Calu3 (cell line): ENCODE measurements at regions of chr1 and their contacts with region 1.

Region 1: DNA sequence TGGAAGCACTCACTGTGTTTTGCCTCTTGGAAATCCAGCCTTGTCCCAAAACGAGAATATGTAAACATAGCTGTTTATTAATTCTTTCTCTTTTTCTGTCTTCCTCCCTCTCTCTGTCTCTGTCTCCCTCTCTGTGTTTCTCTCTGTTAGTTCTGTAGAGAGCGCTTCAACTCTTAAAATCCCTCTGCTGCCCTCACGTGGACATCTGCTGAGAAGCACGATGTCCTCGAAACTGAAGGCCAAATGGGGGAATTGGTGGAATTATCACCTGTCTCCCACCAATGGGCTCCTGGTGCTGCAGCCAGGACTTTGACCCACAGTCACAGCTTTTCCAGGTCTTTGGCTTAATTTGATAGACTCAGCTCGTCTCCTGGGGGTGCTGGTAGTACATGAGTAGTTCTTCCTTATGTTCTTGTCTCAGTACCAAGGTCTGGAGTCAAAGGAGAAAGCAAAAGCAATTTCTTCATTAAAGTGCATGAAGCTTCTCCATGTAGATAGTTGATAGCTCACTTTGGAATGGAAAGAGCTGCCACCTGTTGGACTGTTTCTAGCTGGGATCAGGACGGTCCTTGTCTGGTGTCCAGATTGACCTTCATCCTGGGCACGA is 5.5 kb upstream of the GBP6 start:
- DNase-seq: peak; percentile 78
- H3K4me3 Mint-ChIP-seq: no peak overlapping the region
- H3K27ac Mint-ChIP-seq: no peak overlapping the region
- H3K4me1 Mint-ChIP-seq: peaks cover 13% of the 10 kb centered on the region
- H3K27me3 Mint-ChIP-seq: no peaks in the 10 kb centered on the region
- CTCF ChIP-seq: peak; percentile 61

Region 2: DNA sequence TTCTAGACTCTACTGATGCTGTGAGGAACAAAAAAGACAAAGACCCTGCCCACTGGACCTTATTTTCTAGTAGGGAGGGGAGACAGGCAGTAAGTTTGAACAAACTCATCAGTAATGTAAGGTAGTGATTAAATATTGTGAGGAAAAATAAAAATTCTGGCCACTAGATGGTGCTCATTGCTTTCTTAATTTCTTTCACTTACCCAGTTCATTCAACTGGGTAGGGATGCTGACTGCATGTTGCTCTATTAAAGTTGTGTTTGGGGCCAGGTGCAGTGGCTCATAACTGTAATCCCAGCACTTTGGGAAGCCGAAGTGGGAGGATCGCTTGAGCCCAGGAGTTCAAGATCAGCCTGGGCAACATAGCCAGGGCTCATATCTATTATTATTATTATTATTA is 359.7 kb before region 1 on chr1:
- CTCF ChIA-PET with region 1: no interaction called
- intact Hi-C with region 1: loop called (anchors 1 kb)
- DNase-seq: peak; percentile 35
- H3K4me3 Mint-ChIP-seq: no peak overlapping the region
- H3K27ac Mint-ChIP-seq: no peak overlapping the region
- H3K4me1 Mint-ChIP-seq: peaks cover 9% of the 10 kb centered on the region
- H3K27me3 Mint-ChIP-seq: no peaks in the 10 kb centered on the region
- CTCF ChIP-seq: peak; percentile 29

Region 3: GRCh38 chr1:89198491-89199072 is 159.8 kb before region 1 on chr1 and contains the start of gene GBP4:
- CTCF ChIA-PET with region 1: no interaction called
- intact Hi-C with region 1: loop called (anchors 10 kb)
- DNase-seq: peak; percentile 18
- H3K4me3 Mint-ChIP-seq: peak within 1 kb of the TSS; percentile 75
- H3K27ac Mint-ChIP-seq: peak within 1 kb of the TSS; percentile 53
- H3K4me1 Mint-ChIP-seq: peaks cover 16% of the 10 kb centered on the region
- H3K27me3 Mint-ChIP-seq: no peaks in the 10 kb centered on the region
- CTCF ChIP-seq: no peak
- total RNA-seq, gene GBP4: 10.3 and 26.6 TPM in 2 replicates

Region 4: GRCh38 chr1:89310505-89310904 is 47.9 kb before region 1 on chr1:
- CTCF ChIA-PET with region 1: no interaction called
- intact Hi-C with region 1: no loop called
- DNase-seq: no peak
- H3K4me3 Mint-ChIP-seq: no peak overlapping the region
- H3K27ac Mint-ChIP-seq: no peak overlapping the region
- H3K4me1 Mint-ChIP-seq: peaks cover 21% of the 10 kb centered on the region
- H3K27me3 Mint-ChIP-seq: no peaks in the 10 kb centered on the region
- CTCF ChIP-seq: no peak